Esophagus muscularis mucosa (tissue), 4 donors: ENCODE measurements at regions of chr11 and their contacts with region 1.

Region 1: GRCh38 chr11:33542921-33543320 is 157.7 kb downstream of the C11orf91 start:
- DNase-seq: peak; percentile 70
- H3K4me3 ChIP-seq: no peak overlapping the region
- H3K27ac ChIP-seq: no peak overlapping the region
- H3K4me1 ChIP-seq: no peaks in the 10 kb centered on the region
- H3K27me3 ChIP-seq: peaks cover 0 to 9% (median 0%) of the 10 kb centered on the region in 4 donors
- CTCF ChIP-seq: peak; percentile 30 to 51 (median 32)
- EP300 ChIP-seq: no peak
- POLR2A ChIP-seq: no peak

Region 2: GRCh38 chr11:33687733-33688479 is 145.0 kb after region 1 on chr11:
- intact Hi-C with region 1: loop called (anchors 10 kb)
- DNase-seq: no peak
- H3K4me3 ChIP-seq: no peak overlapping the region
- H3K27ac ChIP-seq: no peak overlapping the region
- H3K4me1 ChIP-seq: peaks cover 25 to 33% (median 30%) of the 10 kb centered on the region in 4 donors
- H3K27me3 ChIP-seq: no peaks in the 10 kb centered on the region
- CTCF ChIP-seq: peak; percentile 38 to 55 (median 53)
- EP300 ChIP-seq: no peak
- POLR2A ChIP-seq: no peak

Region 3: DNA sequence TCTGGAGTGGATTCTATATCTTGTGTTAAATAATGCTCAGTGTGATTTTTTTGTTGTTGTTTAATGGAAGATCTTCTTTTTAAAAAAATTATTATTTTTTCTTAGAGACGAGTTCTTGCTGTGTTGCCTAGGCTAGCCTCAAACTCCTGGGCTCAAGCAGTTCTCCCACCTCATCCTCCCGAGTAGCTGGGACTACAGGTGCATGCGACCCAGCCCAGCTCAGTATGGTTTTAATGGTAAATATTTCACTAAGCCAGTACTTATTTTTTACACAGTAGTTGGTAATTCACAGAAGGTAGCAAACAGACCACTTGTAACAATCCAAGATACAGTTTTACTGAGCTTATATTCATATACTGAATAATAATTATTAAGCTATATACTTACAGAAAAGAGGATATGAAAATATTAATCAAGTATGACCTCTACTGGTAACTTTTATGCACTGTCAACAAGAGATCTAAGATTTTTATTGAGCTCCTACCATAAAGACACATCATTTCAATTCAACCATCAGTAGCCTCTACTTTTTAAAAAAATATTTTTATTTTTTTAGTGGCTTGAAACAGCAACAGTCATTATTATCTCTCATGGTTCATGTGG is 199.4 kb after region 1 on chr11:
- intact Hi-C with region 1: loop called (anchors 5 kb)
- DNase-seq: no peak
- H3K4me3 ChIP-seq: no peak overlapping the region
- H3K27ac ChIP-seq: no peak overlapping the region
- H3K4me1 ChIP-seq: peaks cover 4 to 9% (median 6%) of the 10 kb centered on the region in 4 donors
- H3K27me3 ChIP-seq: no peaks in the 10 kb centered on the region
- CTCF ChIP-seq: peak; percentile 51 to 58 (median 55)
- EP300 ChIP-seq: no peak
- POLR2A ChIP-seq: no peak